A549 (cell line): ENCODE measurements at regions of chr19 and their contacts with region 1.

Region 1: DNA sequence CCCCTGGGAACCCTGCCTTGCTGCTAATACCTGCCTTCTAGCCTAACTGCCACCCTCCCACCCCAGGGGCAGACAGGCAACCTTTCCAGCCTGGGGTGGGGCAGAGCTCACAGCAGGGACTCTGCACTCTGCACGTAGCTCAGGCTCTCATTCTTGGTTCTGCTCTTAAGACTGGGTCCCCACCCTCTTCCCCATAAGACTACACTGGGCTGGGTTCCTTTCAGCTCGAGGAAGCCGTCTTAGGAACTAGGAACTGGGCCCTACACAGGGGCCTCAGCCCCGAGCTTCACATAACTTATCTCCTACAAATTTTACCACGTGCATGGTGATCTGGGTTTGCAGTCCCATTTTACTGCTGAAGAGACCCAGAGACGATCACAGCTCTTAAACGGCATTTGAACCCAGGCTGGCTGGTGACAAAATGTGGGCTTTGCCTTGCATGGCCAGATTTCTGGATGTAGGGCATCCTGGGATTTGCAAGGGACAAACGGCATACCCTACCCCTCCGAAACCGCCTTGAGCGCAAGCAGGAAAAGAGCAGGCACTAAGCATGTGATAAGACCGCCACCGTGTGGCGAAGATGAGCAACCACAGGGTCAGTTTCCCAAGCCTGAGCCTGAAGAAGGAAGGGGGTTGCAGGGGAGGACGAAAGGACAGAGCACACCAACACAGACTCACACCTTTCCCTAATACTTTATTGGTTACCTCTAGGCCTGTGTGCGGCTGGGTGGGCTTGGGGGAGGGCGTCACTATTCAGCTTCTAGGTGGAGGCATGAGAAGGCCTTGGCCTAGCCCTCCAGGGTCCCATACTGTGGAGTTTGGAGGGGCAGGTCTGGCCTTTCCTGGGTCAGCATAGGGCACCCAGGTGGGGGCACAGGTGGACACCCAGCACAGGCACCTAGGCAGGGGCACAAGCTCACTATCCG is 5.1 kb downstream of the JUNB start:
- DNase-seq: peak in 1 of 2 experiments; percentile 86
- ATAC-seq: peak; percentile 27 to 34; a peak in 4 of 6 replicates
- H3K4me3 ChIP-seq: no peak overlapping the region
- H3K27ac ChIP-seq: peak overlapping the region; percentile 69 to 84
- H3K4me1 ChIP-seq: peaks cover 21% of the 10 kb centered on the region
- CTCF ChIP-seq: peak; percentile 90
- EP300 ChIP-seq: no peak
- POLR2A ChIP-seq: no peak
- RAD21 ChIP-seq: peak; percentile 95 to 98

Region 2: DNA sequence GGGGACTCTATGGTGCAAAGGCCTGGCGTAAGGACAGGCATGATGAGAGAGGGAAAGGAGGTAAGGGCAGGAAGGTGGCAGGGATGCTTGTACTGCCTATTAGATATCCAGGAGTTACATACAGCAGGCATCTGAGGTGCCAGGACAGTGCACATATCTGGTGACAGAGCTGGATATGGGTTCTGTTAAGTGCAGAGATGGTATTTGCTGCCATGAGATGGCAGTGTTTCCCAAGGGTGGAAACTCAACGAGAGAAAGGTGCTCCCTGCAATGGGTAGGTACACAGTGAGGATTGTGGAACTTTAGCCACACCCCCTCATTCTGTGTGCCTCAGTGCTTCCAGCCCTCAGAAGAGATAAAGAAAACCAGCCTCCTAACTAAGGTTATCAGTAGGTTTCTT is 79.5 kb before region 1 on chr19:
- CTCF ChIA-PET with region 1: interaction called, 46 read pairs
- POLR2A ChIA-PET with region 1: no interaction called
- DNase-seq: peak in 1 of 2 experiments; percentile 67
- ATAC-seq: peak; percentile 89
- H3K4me3 ChIP-seq: no peak overlapping the region
- H3K27ac ChIP-seq: no peak overlapping the region
- H3K4me1 ChIP-seq: peaks cover 10% of the 10 kb centered on the region; the same call in 1 of the 3 replicates
- CTCF ChIP-seq: peak; percentile 32
- EP300 ChIP-seq: no peak
- POLR2A ChIP-seq: no peak
- RAD21 ChIP-seq: peak; percentile 23 to 51; a peak in 3 of 5 replicates

Region 3: GRCh38 chr19:12730054-12730453 is 66.4 kb before region 1 on chr19:
- CTCF ChIA-PET with region 1: interaction called, 18 read pairs
- POLR2A ChIA-PET with region 1: interaction called, 4 read pairs
- DNase-seq: no peak
- ATAC-seq: no peak
- H3K4me3 ChIP-seq: no peak overlapping the region
- H3K27ac ChIP-seq: no peak overlapping the region
- H3K4me1 ChIP-seq: peaks cover 15% of the 10 kb centered on the region; the same call in 2 of the 3 replicates
- CTCF ChIP-seq: no peak
- EP300 ChIP-seq: no peak
- POLR2A ChIP-seq: no peak
- RAD21 ChIP-seq: no peak

Region 4: GRCh38 chr19:12748489-12748888 is 47.9 kb before region 1 on chr19:
- CTCF ChIA-PET with region 1: interaction called, 10 read pairs
- POLR2A ChIA-PET with region 1: no interaction called
- DNase-seq: no peak
- ATAC-seq: no peak
- H3K4me3 ChIP-seq: no peak overlapping the region
- H3K27ac ChIP-seq: no peak overlapping the region
- H3K4me1 ChIP-seq: peaks cover 5% of the 10 kb centered on the region; the same call in 1 of the 3 replicates
- CTCF ChIP-seq: no peak
- EP300 ChIP-seq: no peak
- POLR2A ChIP-seq: no peak
- RAD21 ChIP-seq: no peak

Region 5: DNA sequence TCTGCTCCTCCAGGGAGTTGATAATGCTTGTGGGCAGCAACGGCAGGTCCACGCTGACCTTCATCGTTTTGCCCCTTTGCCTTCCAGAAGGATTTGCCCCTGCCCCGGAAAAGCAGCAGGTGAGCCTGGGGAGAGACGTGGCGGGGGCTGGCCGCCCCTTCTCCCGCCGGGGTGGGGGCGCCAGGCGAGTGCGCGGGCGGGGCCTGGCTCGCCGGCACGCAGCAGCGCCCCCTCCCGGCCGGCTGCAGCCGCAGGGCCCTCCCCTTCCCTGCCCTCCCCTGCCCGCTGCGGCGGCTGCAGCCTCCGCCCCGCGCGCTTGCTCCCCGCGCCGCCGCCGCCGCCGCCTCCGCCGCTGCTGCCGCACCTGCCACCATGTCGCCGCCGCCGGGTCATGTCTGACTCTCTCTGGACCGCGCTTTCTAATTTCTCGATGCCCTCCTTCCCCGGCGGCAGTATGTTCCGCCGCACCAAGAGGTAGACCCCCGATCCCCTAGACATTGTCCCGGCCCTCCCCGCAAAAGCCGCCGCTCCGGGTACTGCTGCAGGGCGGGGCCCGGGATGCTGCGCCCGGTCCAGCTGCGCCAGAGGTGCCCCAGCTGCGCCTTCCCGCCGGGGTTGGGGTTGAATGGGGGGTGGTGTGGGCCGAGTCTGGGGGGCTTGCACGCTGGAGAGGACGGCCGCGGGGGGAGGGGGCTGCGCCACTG is 41.9 kb after region 1 on chr19 and contains the start of gene MAST1:
- CTCF ChIA-PET with region 1: interaction called, 10 read pairs
- POLR2A ChIA-PET with region 1: no interaction called
- DNase-seq: peak in 1 of 2 experiments; percentile 46
- ATAC-seq: peak; percentile 59 to 68
- H3K4me3 ChIP-seq: peak within 1 kb of the TSS; percentile 78
- H3K27ac ChIP-seq: peak within 1 kb of the TSS; percentile 71 to 87
- H3K4me1 ChIP-seq: peaks cover 10% of the 10 kb centered on the region; the same call in 1 of the 3 replicates
- CTCF ChIP-seq: peak; percentile 69
- EP300 ChIP-seq: no peak
- POLR2A ChIP-seq: no peak
- RAD21 ChIP-seq: no peak
- polyA plus RNA-seq, gene MAST1: 1.4 and 1.8 TPM in 2 replicates

Region 6: GRCh38 chr19:12956446-12957388 is 160.3 kb after region 1 on chr19 and contains the start of gene GADD45GIP1:
- CTCF ChIA-PET with region 1: no interaction called
- POLR2A ChIA-PET with region 1: no interaction called
- DNase-seq: peak; percentile 61 to 83
- ATAC-seq: peak; percentile 92 to 95
- H3K4me3 ChIP-seq: peak within 1 kb of the TSS; percentile 87
- H3K27ac ChIP-seq: peak within 1 kb of the TSS; percentile 98 to 100
- H3K4me1 ChIP-seq: peaks cover 21% of the 10 kb centered on the region; the same call in 2 of the 3 replicates
- CTCF ChIP-seq: no peak
- EP300 ChIP-seq: no peak
- POLR2A ChIP-seq: peak; percentile 86
- RAD21 ChIP-seq: no peak
- polyA plus RNA-seq, gene GADD45GIP1: 18.3 and 26.4 TPM in 2 replicates